Naive thymus-derived CD4-positive, alpha-beta T cell (primary cell): ENCODE measurements at regions of chr17 and their contacts with region 1.

Region 1: DNA sequence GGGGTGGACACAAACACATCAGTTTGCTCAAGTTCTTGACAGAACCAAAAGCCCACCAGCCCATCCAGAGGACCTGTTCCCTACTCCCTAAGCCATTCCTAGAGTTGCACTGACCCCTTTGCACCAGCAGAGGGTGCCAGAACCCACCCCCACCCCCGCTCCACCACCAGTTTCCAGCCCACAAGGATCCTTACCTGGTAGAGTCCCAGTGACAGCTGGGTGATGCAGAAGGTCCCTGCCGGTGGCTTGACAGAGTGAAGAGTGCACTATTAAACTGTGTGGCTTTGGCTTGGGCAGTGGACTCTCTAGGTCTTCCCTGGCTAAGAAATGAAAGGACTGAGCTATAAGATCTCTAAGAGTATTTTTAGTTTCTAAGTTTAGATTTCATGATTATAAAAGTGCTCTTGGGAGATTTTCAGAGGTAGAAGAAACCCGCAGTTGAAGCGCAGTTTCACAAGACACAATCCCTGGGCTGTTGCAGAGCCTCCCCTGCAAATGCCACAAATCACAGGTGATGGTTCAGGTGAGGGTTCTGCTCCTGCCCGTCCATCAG is 73.3 kb upstream of the MTMR4 start:
- DNase-seq: peak; percentile 16 to 60 (median 46)
- ATAC-seq: peak; percentile 86
- H3K4me3 ChIP-seq: no peak overlapping the region
- H3K4me3 Mint-ChIP-seq: no peak overlapping the region
- H3K27ac ChIP-seq: no peak overlapping the region
- H3K27ac Mint-ChIP-seq: no peak overlapping the region
- H3K4me1 ChIP-seq: no peaks in the 10 kb centered on the region
- H3K4me1 Mint-ChIP-seq: peaks cover 0 to 2% (median 0%) of the 10 kb centered on the region in 7 donors
- H3K27me3 ChIP-seq: no peaks in the 10 kb centered on the region
- H3K27me3 Mint-ChIP-seq: peaks cover 0 to 5% (median 3%) of the 10 kb centered on the region in 5 donors

Region 2: GRCh38 chr17:58447039-58447975 is 140.5 kb before region 1 on chr17:
- CTCF ChIA-PET with region 1: no interaction called
- POLR2A ChIA-PET with region 1: no interaction called
- intact Hi-C with region 1: no loop called
- DNase-seq: peak; percentile 11 to 70 (median 36)
- ATAC-seq: peak; percentile 79
- H3K4me3 ChIP-seq: no peak overlapping the region
- H3K4me3 Mint-ChIP-seq: no peak overlapping the region
- H3K27ac ChIP-seq: no peak overlapping the region
- H3K27ac Mint-ChIP-seq: no peak overlapping the region
- H3K4me1 ChIP-seq: no peaks in the 10 kb centered on the region
- H3K4me1 Mint-ChIP-seq: peaks cover 0 to 11% (median 4%) of the 10 kb centered on the region in 7 donors
- H3K27me3 ChIP-seq: no peaks in the 10 kb centered on the region
- H3K27me3 Mint-ChIP-seq: peaks cover 0 to 4% (median 0%) of the 10 kb centered on the region in 5 donors

Region 3: DNA sequence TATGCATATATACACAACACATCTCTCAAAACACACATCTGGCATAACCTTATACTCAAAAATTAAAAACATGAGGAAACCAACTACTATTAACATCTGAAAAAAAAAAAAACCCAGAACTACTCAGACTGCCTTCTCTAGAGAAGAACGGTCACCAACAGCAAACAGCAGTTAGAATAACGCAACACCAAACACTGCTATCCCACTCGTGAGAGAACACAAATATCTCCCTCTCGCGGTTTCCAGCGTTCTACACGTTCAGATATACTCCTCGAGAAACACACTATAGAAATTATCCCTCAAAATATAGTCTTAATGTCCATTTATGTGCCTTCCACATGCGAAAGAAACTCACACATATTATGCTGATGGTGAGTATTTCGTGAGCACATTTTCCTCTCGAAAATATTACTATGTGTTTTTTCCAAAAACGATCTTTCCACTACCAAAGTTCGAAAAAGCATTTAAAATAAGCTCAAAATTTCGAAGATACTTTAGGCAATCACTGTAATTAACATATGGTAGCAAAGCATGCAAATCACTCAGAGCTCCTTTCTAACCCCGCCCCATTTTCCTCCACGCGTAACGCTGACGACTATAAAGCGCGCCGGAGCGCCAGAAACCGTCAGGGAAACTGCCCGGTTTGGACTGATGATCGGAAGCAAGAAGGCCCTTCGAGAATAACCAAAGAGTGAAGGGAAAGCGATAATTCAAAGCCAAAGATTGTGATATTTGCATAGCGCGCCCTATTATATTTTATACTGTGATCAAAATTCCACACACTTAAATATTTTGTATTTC is 43.9 kb after region 1 on chr17:
- CTCF ChIA-PET with region 1: interaction called, 4 read pairs
- POLR2A ChIA-PET with region 1: interaction called, 6 read pairs
- intact Hi-C with region 1: loop called (anchors 1 kb)
- DNase-seq: peak; percentile 74 to 95 (median 92)
- ATAC-seq: peak; percentile 90
- H3K4me3 ChIP-seq: peak overlapping the region; percentile 46
- H3K4me3 Mint-ChIP-seq: no peak overlapping the region
- H3K27ac ChIP-seq: peak overlapping the region; percentile 78
- H3K27ac Mint-ChIP-seq: no peak overlapping the region
- H3K4me1 ChIP-seq: peaks cover 6 to 12% of the 10 kb centered on the region in 2 donors
- H3K4me1 Mint-ChIP-seq: peaks cover 0 to 9% (median 5%) of the 10 kb centered on the region in 7 donors
- H3K27me3 ChIP-seq: no peaks in the 10 kb centered on the region
- H3K27me3 Mint-ChIP-seq: peaks cover 0 to 2% (median 0%) of the 10 kb centered on the region in 5 donors

Region 4: DNA sequence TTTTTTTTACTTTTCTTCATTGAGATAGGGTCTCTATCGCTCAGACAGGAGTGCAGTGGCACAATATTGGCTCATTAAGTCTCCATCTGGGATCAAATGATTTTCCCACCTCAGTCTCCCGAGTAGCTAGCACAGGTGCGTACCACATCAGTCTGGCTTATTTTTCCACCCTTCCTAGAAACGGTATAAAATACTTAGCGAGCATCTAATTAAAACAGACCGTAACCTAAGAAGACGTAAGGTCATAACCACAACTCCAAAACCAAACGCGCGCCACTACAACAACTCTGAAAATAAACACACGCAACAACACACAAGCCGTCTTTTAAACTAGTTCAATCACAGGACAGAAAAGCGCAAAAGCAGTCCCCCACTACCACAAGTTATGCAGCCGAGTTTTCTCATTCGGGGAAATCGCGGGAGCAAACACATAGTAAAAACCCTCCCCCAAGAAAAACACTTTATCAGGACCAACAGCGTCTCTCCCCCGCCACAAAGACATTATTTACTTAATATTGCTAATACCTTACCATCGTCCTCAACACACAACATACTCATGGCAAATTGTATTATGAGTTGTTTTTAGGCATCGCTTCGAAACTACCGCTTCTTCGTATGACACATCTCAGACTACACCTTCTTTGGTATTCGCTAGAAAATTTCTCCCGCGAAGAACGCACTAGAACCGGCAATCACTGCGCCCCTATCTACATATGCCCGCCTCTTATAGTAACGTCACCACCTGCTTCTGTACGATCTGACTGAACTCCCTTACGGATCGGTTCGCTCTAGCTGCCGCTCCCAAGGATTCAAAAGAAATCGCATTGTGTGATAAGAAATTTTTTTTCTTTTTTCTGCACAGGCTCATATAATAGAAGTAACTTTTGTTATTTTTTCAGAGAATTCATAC is 71.3 kb after region 1 on chr17:
- CTCF ChIA-PET with region 1: no interaction called
- POLR2A ChIA-PET with region 1: no interaction called
- intact Hi-C with region 1: loop called in 1 of 2 experiments (anchors 1 kb)
- DNase-seq: peak; percentile 47 to 89 (median 82)
- ATAC-seq: peak; percentile 88
- H3K4me3 ChIP-seq: peak overlapping the region; percentile 44
- H3K4me3 Mint-ChIP-seq: peak overlapping the region; percentile 83 to 93 (median 88)
- H3K27ac ChIP-seq: peak overlapping the region; percentile 82
- H3K27ac Mint-ChIP-seq: peak overlapping the region; percentile 94 to 100 (median 97)
- H3K4me1 ChIP-seq: no peaks in the 10 kb centered on the region
- H3K4me1 Mint-ChIP-seq: peaks cover 10 to 20% (median 15%) of the 10 kb centered on the region in 7 donors
- H3K27me3 ChIP-seq: no peaks in the 10 kb centered on the region
- H3K27me3 Mint-ChIP-seq: peaks cover 0 to 11% (median 0%) of the 10 kb centered on the region in 5 donors

Region 5: GRCh38 chr17:58692239-58693055 is 104.7 kb after region 1 on chr17 and contains the start of gene RAD51C:
- CTCF ChIA-PET with region 1: no interaction called
- POLR2A ChIA-PET with region 1: no interaction called
- intact Hi-C with region 1: loop called (anchors 5 to 10 kb)
- DNase-seq: peak; percentile 66 to 86 (median 82)
- ATAC-seq: peak; percentile 99
- H3K4me3 ChIP-seq: peak within 1 kb of the TSS; percentile 75
- H3K4me3 Mint-ChIP-seq: peak within 1 kb of the TSS; percentile 85 to 99 (median 94)
- H3K27ac ChIP-seq: peak within 1 kb of the TSS; percentile 77
- H3K27ac Mint-ChIP-seq: peak within 1 kb of the TSS; percentile 87 to 96 (median 89)
- H3K4me1 ChIP-seq: peaks cover 12 to 17% of the 10 kb centered on the region in 2 donors
- H3K4me1 Mint-ChIP-seq: peaks cover 20 to 37% (median 31%) of the 10 kb centered on the region in 7 donors
- H3K27me3 ChIP-seq: no peaks in the 10 kb centered on the region
- H3K27me3 Mint-ChIP-seq: peaks cover 0 to 2% (median 0%) of the 10 kb centered on the region in 5 donors
- total RNA-seq, gene RAD51C: 11.4 to 52.6 (median 27.8) TPM

Region 6: DNA sequence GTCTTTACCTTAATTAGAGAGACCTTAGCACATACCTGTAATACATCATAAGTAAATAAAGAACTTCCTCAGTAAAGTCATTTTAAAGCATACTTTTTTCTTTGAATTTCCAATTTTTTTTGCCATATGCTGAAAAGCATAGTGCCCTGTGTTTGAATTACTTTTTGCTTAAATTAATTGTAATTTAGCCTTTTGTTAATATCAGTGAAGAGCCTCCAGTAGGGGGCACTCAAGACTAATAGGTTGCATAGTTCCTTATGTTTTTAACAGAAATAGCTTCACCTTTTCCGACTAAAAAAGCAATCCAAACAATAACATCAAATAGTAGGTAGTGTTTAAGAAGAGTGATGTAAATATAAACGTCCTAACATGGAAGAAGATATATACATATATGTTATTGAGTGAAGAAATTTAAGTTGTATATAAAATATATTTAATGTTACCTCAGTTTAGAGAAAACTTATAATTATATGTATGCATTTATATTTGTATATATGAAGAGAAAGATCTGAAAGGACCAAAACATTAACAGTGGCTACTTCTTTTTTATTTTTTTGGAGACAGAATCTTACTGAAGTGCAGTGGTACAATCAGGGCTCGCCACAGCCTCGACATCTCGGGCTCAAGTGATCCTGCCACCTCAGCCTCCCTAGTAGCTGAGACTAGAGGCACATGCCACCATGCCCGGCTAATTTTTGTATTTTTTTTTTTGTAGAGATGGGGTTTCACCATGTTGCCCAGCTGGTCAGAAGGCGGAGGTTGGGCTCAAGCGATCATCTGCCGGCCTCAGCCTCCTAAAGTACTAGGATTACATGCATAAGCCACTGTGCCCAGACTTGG is 123.4 kb after region 1 on chr17:
- CTCF ChIA-PET with region 1: interaction called, 3 read pairs
- POLR2A ChIA-PET with region 1: no interaction called
- intact Hi-C with region 1: loop called in 1 of 2 experiments (anchors 1 kb)
- DNase-seq: peak in 7 of 9 donors; percentile 12 to 37 (median 32)
- ATAC-seq: no peak
- H3K4me3 ChIP-seq: no peak overlapping the region
- H3K4me3 Mint-ChIP-seq: no peak overlapping the region
- H3K27ac ChIP-seq: no peak overlapping the region
- H3K27ac Mint-ChIP-seq: peak overlapping the region in 1 of 9 donors; percentile 42
- H3K4me1 ChIP-seq: no peaks in the 10 kb centered on the region
- H3K4me1 Mint-ChIP-seq: peaks cover 0 to 12% (median 4%) of the 10 kb centered on the region in 7 donors
- H3K27me3 ChIP-seq: no peaks in the 10 kb centered on the region
- H3K27me3 Mint-ChIP-seq: no peaks in the 10 kb centered on the region

Region 7: DNA sequence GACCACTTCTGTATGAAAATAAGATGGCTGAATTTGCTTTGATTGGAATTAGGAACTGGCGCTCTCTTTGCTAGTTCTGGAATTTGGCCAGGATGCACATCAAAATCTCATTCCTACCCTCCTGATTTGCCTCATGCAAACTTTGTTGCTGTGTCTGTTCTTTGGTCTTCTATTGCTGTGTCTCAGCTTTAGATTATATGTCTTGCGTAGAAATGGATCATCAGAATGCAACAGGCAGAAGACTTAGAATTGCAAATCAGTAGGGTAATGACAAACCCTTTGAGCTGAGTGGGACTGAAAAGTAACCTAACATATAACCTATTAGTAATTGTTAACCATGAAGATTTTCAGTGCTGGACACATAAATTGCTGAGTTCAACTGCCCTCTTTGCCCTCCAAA is 134.9 kb after region 1 on chr17:
- CTCF ChIA-PET with region 1: no interaction called
- POLR2A ChIA-PET with region 1: no interaction called
- intact Hi-C with region 1: no loop called
- DNase-seq: no peak
- ATAC-seq: no peak
- H3K4me3 ChIP-seq: no peak overlapping the region
- H3K4me3 Mint-ChIP-seq: no peak overlapping the region
- H3K27ac ChIP-seq: no peak overlapping the region
- H3K27ac Mint-ChIP-seq: no peak overlapping the region
- H3K4me1 ChIP-seq: no peaks in the 10 kb centered on the region
- H3K4me1 Mint-ChIP-seq: no peaks in the 10 kb centered on the region
- H3K27me3 ChIP-seq: no peaks in the 10 kb centered on the region
- H3K27me3 Mint-ChIP-seq: no peaks in the 10 kb centered on the region

Region 8: GRCh38 chr17:59296771-59297500 is 709.2 kb after region 1 on chr17:
- CTCF ChIA-PET with region 1: no interaction called
- POLR2A ChIA-PET with region 1: no interaction called
- intact Hi-C with region 1: no loop called
- DNase-seq: no peak
- ATAC-seq: no peak
- H3K4me3 ChIP-seq: no peak overlapping the region
- H3K4me3 Mint-ChIP-seq: no peak overlapping the region
- H3K27ac ChIP-seq: no peak overlapping the region
- H3K27ac Mint-ChIP-seq: no peak overlapping the region
- H3K4me1 ChIP-seq: no peaks in the 10 kb centered on the region
- H3K4me1 Mint-ChIP-seq: no peaks in the 10 kb centered on the region
- H3K27me3 ChIP-seq: no peaks in the 10 kb centered on the region
- H3K27me3 Mint-ChIP-seq: peaks cover 0 to 5% (median 0%) of the 10 kb centered on the region in 5 donors